ENCODE measurements at regions of chr4 and their contacts with region 1.

Region 1: DNA sequence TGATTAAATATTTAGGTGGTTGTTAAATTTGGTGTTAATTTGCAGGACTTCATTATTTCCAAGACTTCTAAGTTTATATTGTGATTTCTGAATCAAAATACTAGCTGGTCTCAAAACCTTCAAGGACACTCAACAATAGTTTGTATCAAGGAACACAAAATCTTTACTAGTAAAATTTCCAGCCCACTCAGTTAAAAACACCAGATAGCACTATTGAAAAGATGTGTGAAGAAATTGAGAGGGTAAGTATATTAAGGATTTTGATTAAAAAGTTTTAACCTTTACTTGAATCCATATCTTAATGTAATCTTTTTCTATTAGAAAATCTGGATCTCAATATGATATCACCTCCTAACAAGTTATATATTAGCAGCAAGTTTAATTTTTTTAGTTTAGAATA is 89.3 kb upstream of the UGT8 start:
- DNase-seq: no peak
- H3K4me3 ChIP-seq: no peak overlapping the region
- H3K27ac ChIP-seq: no peak overlapping the region
- H3K4me1 ChIP-seq: no peaks in the 10 kb centered on the region
- H3K27me3 ChIP-seq: no peaks in the 10 kb centered on the region
- CTCF ChIP-seq: no peak
- POLR2A ChIP-seq: no peak

Region 2: GRCh38 chr4:114659386-114660008 is 150.2 kb after region 1 on chr4:
- CTCF ChIA-PET with region 1: interaction called, 3 read pairs
- POLR2A ChIA-PET with region 1: no interaction called
- dilution Hi-C with region 1: no loop called
- intact Hi-C with region 1: loop called (anchors 1 kb)
- DNase-seq: peak; percentile 68
- H3K4me3 ChIP-seq: no peak overlapping the region
- H3K27ac ChIP-seq: no peak overlapping the region
- H3K4me1 ChIP-seq: no peaks in the 10 kb centered on the region
- H3K27me3 ChIP-seq: no peaks in the 10 kb centered on the region
- CTCF ChIP-seq: peak; percentile 71 to 74
- POLR2A ChIP-seq: no peak